IMR-90 (cell line): ENCODE measurements at regions of chr10 and their contacts with region 1.

Region 1: GRCh38 chr10:7519351-7519750 is 108.5 kb upstream of the SFMBT2 start:
- DNase-seq: no peak
- ATAC-seq: no peak
- H3K4me3 ChIP-seq: no peak overlapping the region
- H3K27ac ChIP-seq: no peak overlapping the region
- H3K4me1 ChIP-seq: no peaks in the 10 kb centered on the region
- H3K27me3 ChIP-seq: peaks cover 1% of the 10 kb centered on the region; the same call in 1 of the 2 replicates
- CTCF ChIP-seq: no peak
- POLR2A ChIP-seq: no peak
- RAD21 ChIP-seq: no peak

Region 2: GRCh38 chr10:7045891-7046599 is 473.3 kb before region 1 on chr10:
- CTCF ChIA-PET with region 1: no interaction called
- POLR2A ChIA-PET with region 1: no interaction called
- dilution Hi-C with region 1: no loop called
- in situ Hi-C with region 1: no loop called
- intact Hi-C with region 1: no loop called
- DNase-seq: no peak
- ATAC-seq: no peak
- H3K4me3 ChIP-seq: no peak overlapping the region
- H3K27ac ChIP-seq: no peak overlapping the region
- H3K4me1 ChIP-seq: no peaks in the 10 kb centered on the region
- H3K27me3 ChIP-seq: no peaks in the 10 kb centered on the region
- CTCF ChIP-seq: no peak
- POLR2A ChIP-seq: no peak
- RAD21 ChIP-seq: no peak

Region 3: GRCh38 chr10:7687228-7687907 is 168.0 kb after region 1 on chr10:
- CTCF ChIA-PET with region 1: interaction called, 3 read pairs
- POLR2A ChIA-PET with region 1: no interaction called
- dilution Hi-C with region 1: no loop called
- in situ Hi-C with region 1: loop called (anchors 5 kb)
- intact Hi-C with region 1: no loop called
- DNase-seq: peak; percentile 85
- ATAC-seq: peak; percentile 96
- H3K4me3 ChIP-seq: no peak overlapping the region
- H3K27ac ChIP-seq: no peak overlapping the region
- H3K4me1 ChIP-seq: no peaks in the 10 kb centered on the region
- H3K27me3 ChIP-seq: no peaks in the 10 kb centered on the region; the same call in 1 of the 2 replicates
- CTCF ChIP-seq: peak; percentile 85
- POLR2A ChIP-seq: no peak
- RAD21 ChIP-seq: peak; percentile 70